Lower leg skin (tissue), 4 donors: ENCODE measurements at regions of chr7 and their contacts with region 1.

Region 1: DNA sequence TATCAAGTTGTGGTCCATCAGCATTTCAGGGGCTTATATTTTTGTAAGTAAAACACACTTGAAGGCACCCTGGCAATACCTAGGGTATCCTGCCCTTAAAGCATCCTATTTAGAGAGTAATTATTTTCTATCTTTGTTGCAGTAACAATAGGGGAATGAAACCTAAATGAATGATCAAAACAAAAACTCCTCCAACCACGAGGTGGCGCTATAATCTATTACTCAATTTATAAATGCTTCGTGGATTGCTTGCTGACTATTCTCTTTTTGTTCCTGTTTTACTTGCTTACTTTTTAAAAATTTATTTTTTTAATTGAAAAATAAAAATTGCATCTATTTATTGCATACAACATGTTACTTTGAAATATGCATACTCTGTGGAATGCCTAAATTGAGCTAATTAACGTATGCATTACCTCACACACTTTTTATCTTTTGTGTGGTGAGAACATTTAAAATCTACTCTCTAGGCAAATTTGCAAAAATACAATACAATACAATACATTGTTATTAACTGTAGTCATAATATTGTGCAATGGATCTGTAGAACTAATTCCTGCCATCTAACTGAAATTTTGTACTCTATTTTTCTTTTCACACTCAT is 147.7 kb upstream of the BMPER start:
- DNase-seq: peak in 1 of 2 donors; percentile 32
- H3K4me3 ChIP-seq: no peak overlapping the region
- CTCF ChIP-seq: no peak
- POLR2A ChIP-seq: no peak

Region 2: GRCh38 chr7:33895025-33895804 is 137.6 kb after region 1 on chr7:
- intact Hi-C with region 1: loop called (anchors 10 kb)
- DNase-seq: peak; percentile 82 to 96
- H3K4me3 ChIP-seq: no peak overlapping the region
- CTCF ChIP-seq: peak in 1 of 3 donors; percentile 42
- POLR2A ChIP-seq: no peak

Region 3: GRCh38 chr7:33932832-33933468 is 175.3 kb after region 1 on chr7:
- intact Hi-C with region 1: loop called (anchors 10 kb)
- DNase-seq: peak; percentile 73 to 95
- H3K4me3 ChIP-seq: no peak overlapping the region
- CTCF ChIP-seq: peak in 1 of 3 donors; percentile 75
- POLR2A ChIP-seq: no peak

Region 4: DNA sequence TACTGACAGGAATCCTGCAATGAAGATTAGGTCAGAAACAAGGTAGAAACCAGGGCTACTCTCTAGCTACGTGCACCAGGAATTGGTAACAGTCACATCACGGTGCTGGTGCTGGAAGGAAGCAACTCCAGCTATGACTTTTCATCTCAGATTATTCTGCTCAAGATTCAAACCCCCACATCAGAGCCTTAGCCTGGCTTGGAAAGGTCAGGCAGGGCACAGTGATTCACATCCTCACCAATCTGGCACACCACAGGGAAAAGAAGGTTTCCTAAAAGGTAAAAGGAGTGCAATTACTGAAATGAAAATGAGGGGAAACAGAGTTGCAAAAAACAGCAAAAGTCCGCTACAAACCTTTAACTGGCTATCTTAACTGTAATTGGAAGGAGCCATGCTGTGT is 660.1 kb after region 1 on chr7:
- intact Hi-C with region 1: no loop called
- DNase-seq: no peak
- H3K4me3 ChIP-seq: no peak overlapping the region
- CTCF ChIP-seq: no peak
- POLR2A ChIP-seq: no peak